Calu3 (cell line): ENCODE measurements at regions of chr12 and their contacts with region 1.

Region 1: GRCh38 chr12:118357257-118358007 is 15.3 kb downstream of the TAOK3 start:
- DNase-seq: peak; percentile 58
- H3K4me3 Mint-ChIP-seq: peak overlapping the region; percentile 74
- H3K27ac Mint-ChIP-seq: peak overlapping the region; percentile 93
- H3K4me1 Mint-ChIP-seq: peaks cover 24% of the 10 kb centered on the region
- H3K27me3 Mint-ChIP-seq: no peaks in the 10 kb centered on the region
- CTCF ChIP-seq: no peak

Region 2: DNA sequence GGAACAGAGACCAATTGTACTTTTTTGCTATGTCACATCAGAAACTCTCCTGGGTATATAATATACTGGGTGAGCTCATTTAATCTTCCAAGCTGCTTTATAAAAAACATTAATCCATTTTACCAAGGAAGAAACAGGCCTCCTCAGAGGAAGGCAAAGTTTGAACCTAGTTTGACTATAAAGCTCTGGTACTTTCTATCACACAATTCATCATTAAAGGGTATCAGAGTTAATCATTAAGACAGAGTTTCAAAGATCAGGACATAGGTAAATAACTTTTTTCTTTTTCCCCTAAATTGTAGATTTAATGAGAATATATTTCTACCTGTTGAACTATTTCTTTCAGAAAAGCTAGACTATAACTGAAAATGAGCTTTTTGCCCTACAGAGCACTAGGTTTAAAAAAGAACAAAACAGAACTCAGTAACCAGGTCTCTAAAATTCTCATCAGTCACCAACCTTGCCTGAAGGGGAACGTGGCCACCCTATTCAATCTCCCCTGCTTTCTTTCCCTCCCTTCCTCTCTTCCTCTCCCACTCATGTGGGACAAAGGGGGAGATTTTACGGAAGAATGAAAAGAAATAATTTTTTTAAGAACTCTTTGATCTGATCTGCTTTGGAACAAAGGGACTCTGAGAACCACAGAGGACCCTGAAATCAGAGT is 1185.8 kb before region 1 on chr12:
- CTCF ChIA-PET with region 1: interaction called, 11 read pairs
- intact Hi-C with region 1: no loop called
- DNase-seq: no peak
- H3K4me3 Mint-ChIP-seq: no peak overlapping the region
- H3K27ac Mint-ChIP-seq: no peak overlapping the region
- H3K4me1 Mint-ChIP-seq: peaks cover 9% of the 10 kb centered on the region
- H3K27me3 Mint-ChIP-seq: no peaks in the 10 kb centered on the region
- CTCF ChIP-seq: no peak

Region 3: DNA sequence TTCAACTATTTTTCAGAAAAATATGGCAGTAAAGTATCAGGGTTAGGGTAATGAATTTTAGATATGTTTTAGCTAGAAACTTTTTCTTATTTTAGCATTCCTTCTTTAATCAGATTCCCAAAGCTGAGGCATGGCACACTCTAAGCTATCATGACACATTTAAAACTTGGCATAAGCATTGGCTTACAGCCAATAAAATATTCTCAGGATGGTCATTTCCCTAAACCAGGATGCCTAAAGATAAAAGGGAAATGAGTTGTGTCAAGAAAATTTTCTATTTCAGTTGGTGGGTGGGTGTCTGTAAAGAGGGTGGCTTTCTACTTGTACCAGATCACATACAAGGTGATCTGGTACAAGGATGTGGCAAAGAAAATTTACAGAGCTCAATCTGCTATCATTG is 173.7 kb before region 1 on chr12:
- CTCF ChIA-PET with region 1: interaction called, 4 read pairs
- intact Hi-C with region 1: loop called (anchors 5 kb)
- DNase-seq: no peak
- H3K4me3 Mint-ChIP-seq: no peak overlapping the region
- H3K27ac Mint-ChIP-seq: no peak overlapping the region
- H3K4me1 Mint-ChIP-seq: peaks cover 46% of the 10 kb centered on the region
- H3K27me3 Mint-ChIP-seq: no peaks in the 10 kb centered on the region
- CTCF ChIP-seq: no peak

Region 4: GRCh38 chr12:118271790-118272417 is 85.5 kb before region 1 on chr12:
- CTCF ChIA-PET with region 1: interaction called, 4 read pairs
- intact Hi-C with region 1: loop called (anchors 2 kb)
- DNase-seq: peak; percentile 65
- H3K4me3 Mint-ChIP-seq: peak overlapping the region; percentile 55
- H3K27ac Mint-ChIP-seq: peak overlapping the region; percentile 90
- H3K4me1 Mint-ChIP-seq: peaks cover 42% of the 10 kb centered on the region
- H3K27me3 Mint-ChIP-seq: no peaks in the 10 kb centered on the region
- CTCF ChIP-seq: no peak

Region 5: DNA sequence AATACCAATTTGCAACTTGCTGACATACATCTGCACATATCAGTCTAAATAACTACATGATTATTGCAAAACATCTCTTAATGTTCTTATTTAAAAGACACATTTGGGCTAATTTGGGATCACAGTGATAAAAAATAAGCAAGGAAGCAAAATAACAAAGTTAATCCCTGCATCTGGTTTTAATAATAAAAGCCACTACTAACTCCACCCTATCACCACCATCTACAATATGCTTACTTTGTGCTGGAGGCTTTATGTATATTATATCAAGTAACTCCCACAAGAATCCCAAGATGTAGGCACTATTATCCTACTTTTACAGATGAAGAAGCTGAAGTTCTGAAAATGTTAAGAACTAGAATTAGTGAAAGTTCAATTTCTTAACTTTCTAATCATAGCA is 30.4 kb before region 1 on chr12:
- CTCF ChIA-PET with region 1: no interaction called
- intact Hi-C with region 1: no loop called
- DNase-seq: no peak
- H3K4me3 Mint-ChIP-seq: no peak overlapping the region
- H3K27ac Mint-ChIP-seq: no peak overlapping the region
- H3K4me1 Mint-ChIP-seq: no peaks in the 10 kb centered on the region
- H3K27me3 Mint-ChIP-seq: no peaks in the 10 kb centered on the region
- CTCF ChIP-seq: no peak

Region 6: GRCh38 chr12:118337194-118337838 is 20.1 kb before region 1 on chr12:
- CTCF ChIA-PET with region 1: interaction called, 4 read pairs
- intact Hi-C with region 1: loop called (anchors 2 kb)
- DNase-seq: no peak
- H3K4me3 Mint-ChIP-seq: no peak overlapping the region
- H3K27ac Mint-ChIP-seq: no peak overlapping the region
- H3K4me1 Mint-ChIP-seq: peaks cover 37% of the 10 kb centered on the region
- H3K27me3 Mint-ChIP-seq: no peaks in the 10 kb centered on the region
- CTCF ChIP-seq: no peak